ENCODE measurements at regions of chr5 and their contacts with region 1.

Region 1: GRCh38 chr5:42745426-42745825 is 11.2 kb upstream of the CCDC152 start:
- DNase-seq: peak; percentile 25 to 83
- H3K4me3 ChIP-seq: no peak overlapping the region
- H3K27ac ChIP-seq: no peak overlapping the region
- H3K4me1 ChIP-seq: no peaks in the 10 kb centered on the region
- H3K27me3 ChIP-seq: no peaks in the 10 kb centered on the region
- CTCF ChIP-seq: peak; percentile 40 to 79 (median 67)
- EP300 ChIP-seq: no peak
- POLR2A ChIP-seq: no peak
- RAD21 ChIP-seq: peak; percentile 64 to 74

Region 2: GRCh38 chr5:42573386-42573785 is 172.0 kb before region 1 on chr5:
- CTCF ChIA-PET with region 1: no interaction called
- POLR2A ChIA-PET with region 1: no interaction called
- DNase-seq: no peak
- H3K4me3 ChIP-seq: no peak overlapping the region
- H3K27ac ChIP-seq: no peak overlapping the region
- H3K4me1 ChIP-seq: no peaks in the 10 kb centered on the region
- H3K27me3 ChIP-seq: no peaks in the 10 kb centered on the region
- CTCF ChIP-seq: no peak
- EP300 ChIP-seq: no peak
- POLR2A ChIP-seq: no peak
- RAD21 ChIP-seq: no peak

Region 3: DNA sequence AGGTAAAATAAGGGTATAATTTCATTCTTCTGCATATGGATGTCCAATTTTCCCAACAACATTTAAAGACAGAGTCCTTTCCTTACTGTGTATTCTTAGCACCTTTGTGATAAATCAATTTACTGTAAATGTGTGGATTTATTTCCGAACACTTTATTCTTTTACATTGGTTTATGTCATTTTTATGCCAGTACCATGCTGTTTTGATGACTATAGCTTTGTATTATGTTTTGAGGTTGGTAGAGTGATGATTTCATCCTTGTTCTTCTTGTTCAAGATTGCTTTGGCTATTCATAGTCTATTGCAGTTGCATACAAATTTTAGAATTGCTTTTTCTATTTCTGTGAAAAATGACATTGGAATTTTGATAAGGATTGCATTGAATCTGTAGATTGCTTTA is 42.2 kb before region 1 on chr5:
- CTCF ChIA-PET with region 1: no interaction called
- POLR2A ChIA-PET with region 1: no interaction called
- DNase-seq: no peak
- H3K4me3 ChIP-seq: no peak overlapping the region
- H3K27ac ChIP-seq: no peak overlapping the region
- H3K4me1 ChIP-seq: no peaks in the 10 kb centered on the region
- H3K27me3 ChIP-seq: no peaks in the 10 kb centered on the region
- CTCF ChIP-seq: no peak
- EP300 ChIP-seq: no peak
- POLR2A ChIP-seq: no peak
- RAD21 ChIP-seq: no peak

Region 4: DNA sequence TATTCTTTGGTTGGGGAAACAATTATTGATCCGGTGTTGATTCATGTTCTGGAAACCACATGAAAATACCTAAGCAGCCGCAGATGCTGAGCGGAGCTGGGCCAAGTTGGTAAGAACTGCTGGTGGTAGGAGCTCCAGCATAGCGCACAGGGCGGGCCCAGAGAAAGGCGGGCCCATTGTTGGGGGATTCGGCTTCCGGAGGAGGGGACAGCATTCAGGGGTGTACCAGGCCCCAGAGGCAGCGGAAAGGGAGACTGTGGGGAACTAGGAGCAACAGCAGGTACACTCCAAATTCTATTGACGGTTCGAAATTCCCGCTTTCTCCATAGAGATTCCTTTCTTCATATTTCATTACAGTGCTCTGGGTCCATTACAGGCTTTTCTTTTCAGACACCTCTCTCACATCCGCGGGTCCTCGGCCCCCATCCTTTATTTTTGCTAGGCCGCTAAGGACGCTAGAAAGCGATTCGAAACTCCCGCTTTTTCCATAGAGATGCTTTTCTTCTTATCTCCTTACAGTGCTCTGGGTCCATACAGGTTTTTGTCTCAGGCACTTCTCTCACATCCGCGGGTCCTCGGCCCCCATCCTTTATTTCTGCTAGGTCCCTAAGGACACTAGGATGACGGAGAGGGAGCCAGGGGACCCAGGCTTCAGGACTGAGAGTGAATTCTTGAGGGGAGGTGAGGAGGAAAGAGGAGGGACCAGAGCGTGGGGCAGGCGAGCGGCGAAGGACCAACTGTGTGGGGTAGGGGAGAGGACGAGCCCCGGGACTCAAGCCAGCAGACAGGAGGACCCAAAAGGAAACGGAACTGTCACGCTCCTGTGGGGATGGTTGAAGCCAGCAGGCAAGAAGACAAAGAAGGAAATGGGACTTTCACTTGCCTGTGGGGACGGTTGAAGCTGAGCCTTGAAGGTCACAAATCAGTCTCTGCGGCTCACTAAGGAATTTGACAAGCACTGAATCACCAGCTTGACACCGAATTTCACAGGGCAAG is 11.5 kb after region 1 on chr5 and contains the start of gene CCDC152:
- CTCF ChIA-PET with region 1: interaction called, 12 read pairs
- POLR2A ChIA-PET with region 1: interaction called, 3 read pairs
- DNase-seq: peak in 1 of 2 experiments; percentile 70
- H3K4me3 ChIP-seq: peak within 1 kb of the TSS; percentile 43 to 69 (median 49)
- H3K27ac ChIP-seq: no peak within 1 kb of the TSS
- H3K4me1 ChIP-seq: peaks cover 0 to 4% (median 0%) of the 10 kb centered on the region in 4 experiments; a peak in 1 of 7 replicates
- H3K27me3 ChIP-seq: no peaks in the 10 kb centered on the region
- CTCF ChIP-seq: no peak
- EP300 ChIP-seq: no peak
- POLR2A ChIP-seq: peak in 1 of 2 experiments; percentile 52; a peak in 1 of 3 replicates
- RAD21 ChIP-seq: 0 out of 4 replicates have a peak, but pooled peaks of 1 of the 2 experiments have one; percentile 5
- total RNA-seq, gene CCDC152: 9.5 and 10.2 TPM in 2 replicates

Region 5: DNA sequence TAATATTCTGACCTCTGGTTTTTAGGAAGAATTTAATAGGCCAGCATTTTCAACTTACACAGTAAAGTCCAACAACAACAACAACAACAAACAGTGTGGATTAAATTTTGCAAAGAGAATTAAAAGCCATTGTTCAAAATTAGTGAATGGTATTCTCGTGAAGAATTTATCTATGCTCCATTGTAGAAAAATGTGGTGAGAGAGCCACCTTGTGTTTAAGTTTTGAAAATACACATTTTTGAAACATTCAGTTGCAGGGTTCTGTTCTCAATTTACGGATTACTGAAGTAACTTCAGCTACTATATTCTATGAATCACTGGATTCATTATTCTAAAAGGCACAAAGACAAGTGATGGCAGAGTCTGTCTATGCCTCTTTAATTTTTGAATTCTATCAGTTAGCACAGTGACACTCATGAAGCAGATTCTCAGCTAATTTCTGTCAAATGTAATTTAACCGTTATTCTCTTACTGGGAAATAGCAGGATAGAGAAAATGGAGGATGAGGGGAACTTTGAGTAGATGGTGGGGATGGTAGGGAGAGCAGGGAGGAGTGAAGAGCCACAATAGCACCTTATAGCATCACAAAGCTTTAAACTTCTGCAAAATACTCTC is 22.2 kb after region 1 on chr5:
- CTCF ChIA-PET with region 1: interaction called, 12 read pairs
- POLR2A ChIA-PET with region 1: no interaction called
- DNase-seq: no peak
- H3K4me3 ChIP-seq: no peak overlapping the region
- H3K27ac ChIP-seq: no peak overlapping the region
- H3K4me1 ChIP-seq: no peaks in the 10 kb centered on the region
- H3K27me3 ChIP-seq: no peaks in the 10 kb centered on the region
- CTCF ChIP-seq: peak in 2 of 3 experiments; percentile 18 to 36; a peak in 2 of 4 replicates
- EP300 ChIP-seq: no peak
- POLR2A ChIP-seq: no peak
- RAD21 ChIP-seq: peak; percentile 68 to 72

Region 6: DNA sequence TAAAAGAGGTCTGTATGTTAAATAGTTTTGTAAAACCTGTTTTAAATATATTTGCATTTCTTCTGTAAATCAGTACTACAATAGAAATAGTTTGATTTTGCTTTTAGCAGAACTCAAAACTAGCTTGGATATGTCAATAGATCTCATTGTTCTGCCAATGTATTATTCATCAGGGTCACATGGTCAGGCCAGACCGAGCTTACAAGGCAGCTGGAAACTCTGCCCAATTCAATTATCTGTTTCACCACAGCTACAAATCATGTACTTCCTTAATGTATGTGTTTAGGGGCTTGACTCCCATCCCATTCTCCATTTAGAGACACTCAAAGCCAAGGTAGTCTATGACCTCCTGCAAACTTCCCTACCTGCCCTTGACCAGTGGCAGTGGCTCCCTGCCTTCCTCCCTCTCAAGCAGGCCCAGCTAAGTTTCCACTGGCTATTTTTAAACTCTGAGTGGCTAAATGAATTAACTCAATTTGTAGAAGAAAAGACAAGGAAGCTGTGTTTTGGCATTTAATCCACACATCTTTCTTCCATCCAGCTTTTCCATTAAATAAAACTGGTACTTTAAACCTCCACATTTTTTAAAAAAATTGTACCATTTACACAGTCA is 112.7 kb after region 1 on chr5:
- CTCF ChIA-PET with region 1: interaction called, 10 read pairs
- POLR2A ChIA-PET with region 1: no interaction called
- DNase-seq: no peak
- H3K4me3 ChIP-seq: no peak overlapping the region
- H3K27ac ChIP-seq: no peak overlapping the region
- H3K4me1 ChIP-seq: peaks cover 0 to 3% (median 0%) of the 10 kb centered on the region in 4 experiments; a peak in 1 of 7 replicates
- H3K27me3 ChIP-seq: peaks cover 0 to 1% (median 0%) of the 10 kb centered on the region in 4 experiments; a peak in 1 of 7 replicates
- CTCF ChIP-seq: no peak
- EP300 ChIP-seq: no peak
- POLR2A ChIP-seq: no peak
- RAD21 ChIP-seq: no peak

Measured in H1 (cell line).